K562 (cell line): ENCODE measurements at regions of chr16 and their contacts with region 1.

Region 1: DNA sequence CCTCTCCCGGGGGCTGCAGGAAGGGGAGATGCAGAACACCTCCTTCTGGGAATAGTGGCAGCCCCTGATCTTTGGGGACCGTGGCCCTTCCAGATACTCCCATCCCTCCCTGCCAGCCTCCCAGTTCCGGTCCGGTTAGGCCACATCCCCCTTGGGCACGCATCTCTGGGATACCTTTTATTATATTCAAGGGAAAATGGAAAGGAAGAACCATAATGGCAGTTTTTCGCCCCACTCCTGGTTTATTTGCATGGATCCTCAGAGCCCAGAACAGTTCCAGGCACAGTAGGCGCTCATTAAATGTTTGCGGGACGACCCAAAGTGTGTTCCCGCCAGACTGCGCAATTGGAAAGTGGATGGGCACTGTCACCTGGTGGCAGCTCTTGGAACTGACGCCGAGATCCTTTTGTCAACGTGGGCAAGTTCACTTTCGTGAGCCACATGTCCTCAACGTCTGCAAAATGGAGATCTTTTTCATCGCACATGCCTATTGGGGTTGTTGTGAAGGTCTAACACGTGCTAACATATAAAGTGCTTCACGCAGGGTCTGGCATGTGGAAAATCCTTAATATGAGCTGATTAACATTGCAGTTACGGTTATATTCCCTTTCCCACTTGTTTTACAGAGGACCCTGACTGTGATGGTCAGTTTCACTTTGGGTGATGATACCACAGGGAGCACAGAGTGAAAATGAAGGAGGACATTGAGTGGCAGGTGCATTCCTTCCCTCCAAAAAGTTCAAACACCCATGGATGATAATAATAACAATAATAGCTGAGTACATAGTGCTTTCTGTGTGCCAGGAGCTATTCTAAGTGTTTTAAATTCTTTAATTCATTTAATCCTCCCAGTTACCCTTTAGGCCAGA is 1.7 kb upstream of the GPRC5B start:
- DNase-seq: peak; percentile 56 to 85 (median 60)
- ATAC-seq: peak; percentile 71
- H3K4me3 ChIP-seq: no peak overlapping the region
- H3K27ac ChIP-seq: no peak overlapping the region
- H3K4me1 ChIP-seq: peaks cover 3 to 25% of the 10 kb centered on the region in 2 experiments; a peak in 3 of 5 replicates
- H3K27me3 ChIP-seq: peaks cover 2 to 20% of the 10 kb centered on the region in 2 experiments; a peak in 3 of 5 replicates
- CTCF ChIP-seq: peak; percentile 94 to 98 (median 98)
- EP300 ChIP-seq: no peak
- POLR2A ChIP-seq: no peak
- RAD21 ChIP-seq: peak; percentile 98 to 99

Region 2: GRCh38 chr16:19375561-19376158 is 510.6 kb before region 1 on chr16:
- CTCF ChIA-PET with region 1: no interaction called
- POLR2A ChIA-PET with region 1: no interaction called
- in situ Hi-C with region 1: loop called (anchors 25 kb)
- intact Hi-C with region 1: loop called (anchors 10 kb)
- DNase-seq: peak; percentile 65 to 70 (median 70)
- ATAC-seq: peak; percentile 78
- H3K4me3 ChIP-seq: no peak overlapping the region
- H3K27ac ChIP-seq: no peak overlapping the region
- H3K4me1 ChIP-seq: no peaks in the 10 kb centered on the region
- H3K27me3 ChIP-seq: no peaks in the 10 kb centered on the region
- CTCF ChIP-seq: peak; percentile 73 to 88 (median 73)
- EP300 ChIP-seq: no peak
- POLR2A ChIP-seq: no peak
- RAD21 ChIP-seq: peak; percentile 85 to 94

Region 3: GRCh38 chr16:19389246-19389645 is 497.1 kb before region 1 on chr16:
- CTCF ChIA-PET with region 1: no interaction called
- POLR2A ChIA-PET with region 1: no interaction called
- in situ Hi-C with region 1: loop called (anchors 25 kb)
- intact Hi-C with region 1: loop called (anchors 10 kb)
- DNase-seq: peak; percentile 61 to 74 (median 66)
- ATAC-seq: peak; percentile 95
- H3K4me3 ChIP-seq: no peak overlapping the region
- H3K27ac ChIP-seq: no peak overlapping the region
- H3K4me1 ChIP-seq: peaks cover 0 to 6% of the 10 kb centered on the region in 2 experiments; a peak in 3 of 5 replicates
- H3K27me3 ChIP-seq: no peaks in the 10 kb centered on the region; a peak in 1 of 5 replicates
- CTCF ChIP-seq: peak; percentile 73 to 82 (median 79)
- EP300 ChIP-seq: no peak
- POLR2A ChIP-seq: no peak
- RAD21 ChIP-seq: peak in 1 of 2 experiments; percentile 81; a peak in 3 of 4 replicates

Region 4: GRCh38 chr16:19555162-19555937 is 331.0 kb before region 1 on chr16 and contains the start of gene VPS35L:
- CTCF ChIA-PET with region 1: interaction called, 14 read pairs
- POLR2A ChIA-PET with region 1: no interaction called
- in situ Hi-C with region 1: no loop called
- intact Hi-C with region 1: loop called (anchors 1 kb)
- DNase-seq: peak; percentile 85 to 96 (median 88)
- ATAC-seq: peak; percentile 98
- H3K4me3 ChIP-seq: peak within 1 kb of the TSS; percentile 67
- H3K27ac ChIP-seq: peak within 1 kb of the TSS; percentile 89
- H3K4me1 ChIP-seq: peaks cover 0 to 8% of the 10 kb centered on the region in 2 experiments; a peak in 3 of 5 replicates
- H3K27me3 ChIP-seq: no peaks in the 10 kb centered on the region
- CTCF ChIP-seq: peak; percentile 75 to 80 (median 76)
- EP300 ChIP-seq: 0 out of 2 replicates have a peak, but pooled peaks have one; percentile 4
- POLR2A ChIP-seq: peak; percentile 80
- RAD21 ChIP-seq: peak in 1 of 2 experiments; percentile 22; a peak in 2 of 4 replicates
- polyA plus RNA-seq, gene VPS35L: 18.3 to 27.1 TPM

Region 5: GRCh38 chr16:19601083-19601976 is 285.0 kb before region 1 on chr16:
- CTCF ChIA-PET with region 1: interaction called, 101 read pairs
- POLR2A ChIA-PET with region 1: interaction called, 3 read pairs
- in situ Hi-C with region 1: loop called (anchors 5 kb)
- intact Hi-C with region 1: loop called (anchors 1 kb)
- DNase-seq: peak; percentile 44 to 59 (median 48)
- ATAC-seq: peak; percentile 47; the same call in 2 of the 3 replicates
- H3K4me3 ChIP-seq: no peak overlapping the region
- H3K27ac ChIP-seq: no peak overlapping the region
- H3K4me1 ChIP-seq: no peaks in the 10 kb centered on the region
- H3K27me3 ChIP-seq: no peaks in the 10 kb centered on the region
- CTCF ChIP-seq: peak; percentile 59 to 83 (median 70)
- EP300 ChIP-seq: no peak
- POLR2A ChIP-seq: no peak
- RAD21 ChIP-seq: peak; percentile 79 to 89

Region 6: GRCh38 chr16:19722269-19722952 is 163.9 kb before region 1 on chr16:
- CTCF ChIA-PET with region 1: no interaction called
- POLR2A ChIA-PET with region 1: no interaction called
- in situ Hi-C with region 1: no loop called
- intact Hi-C with region 1: loop called (anchors 5 kb)
- DNase-seq: peak; percentile 27 to 74 (median 50)
- ATAC-seq: no peak; the same call in 1 of the 3 replicates
- H3K4me3 ChIP-seq: no peak overlapping the region
- H3K27ac ChIP-seq: peak overlapping the region; percentile 41; the same call in 2 of the 3 replicates
- H3K4me1 ChIP-seq: peaks cover 35 to 54% of the 10 kb centered on the region in 2 experiments; a peak in 4 of 5 replicates
- H3K27me3 ChIP-seq: no peaks in the 10 kb centered on the region
- CTCF ChIP-seq: no peak
- EP300 ChIP-seq: peak; percentile 70
- POLR2A ChIP-seq: no peak
- RAD21 ChIP-seq: no peak